Activated CD4-positive, alpha-beta T cell treated with anti-CD3 and anti-CD28 coated beads for 36 hours (primary cell): ENCODE measurements at regions of chr11 and their contacts with region 1.

Region 1: GRCh38 chr11:798093-798713 is at the start of gene SLC25A22:
- DNase-seq: peak; percentile 92
- ATAC-seq: peak; percentile 63
- H3K4me3 Mint-ChIP-seq: peak within 1 kb of the TSS; percentile 79
- H3K27ac Mint-ChIP-seq: peak within 1 kb of the TSS; percentile 67
- H3K4me1 Mint-ChIP-seq: peaks cover 13% of the 10 kb centered on the region
- H3K27me3 Mint-ChIP-seq: no peaks in the 10 kb centered on the region
- total RNA-seq, gene SLC25A22: 33.9 to 36.6 TPM

Region 2: DNA sequence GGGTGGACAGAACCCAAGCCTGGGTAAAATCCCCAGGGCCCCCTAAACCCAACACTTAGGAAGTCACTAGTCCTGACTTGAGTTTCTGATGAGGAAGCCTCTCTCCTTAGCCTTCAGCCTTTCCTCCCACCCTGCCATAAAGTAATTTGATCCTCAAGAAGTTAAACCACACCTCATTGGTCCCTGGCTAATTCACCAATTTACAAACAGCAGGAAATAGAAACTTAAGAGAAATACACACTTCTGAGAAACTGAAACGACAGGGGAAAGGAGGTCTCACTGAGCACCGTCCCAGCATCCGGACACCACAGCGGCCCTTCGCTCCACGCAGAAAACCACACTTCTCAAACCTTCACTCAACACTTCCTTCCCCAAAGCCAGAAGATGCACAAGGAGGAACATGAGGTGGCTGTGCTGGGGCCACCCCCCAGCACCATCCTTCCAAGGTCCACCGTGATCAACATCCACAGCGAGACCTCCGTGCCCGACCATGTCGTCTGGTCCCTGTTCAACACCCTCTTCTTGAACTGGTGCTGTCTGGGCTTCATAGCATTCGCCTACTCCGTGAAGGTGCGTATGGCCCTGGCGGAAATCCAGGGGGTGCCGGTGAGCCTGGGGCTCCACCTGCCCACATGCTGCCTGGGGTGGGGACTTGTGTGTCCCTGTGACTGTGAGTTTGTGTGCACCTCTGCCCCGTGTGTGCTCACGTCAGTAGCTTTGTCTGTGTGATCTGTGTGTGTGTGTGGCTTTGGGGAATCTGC is 484.2 kb before region 1 on chr11 and contains the start of gene IFITM1:
- CTCF ChIA-PET with region 1: no interaction called
- POLR2A ChIA-PET with region 1: no interaction called
- intact Hi-C with region 1: loop called in 1 of 2 experiments (anchors 5 kb)
- DNase-seq: peak; percentile 78
- ATAC-seq: peak; percentile 40
- H3K4me3 Mint-ChIP-seq: peak within 1 kb of the TSS; percentile 95
- H3K27ac Mint-ChIP-seq: peak within 1 kb of the TSS; percentile 99
- H3K4me1 Mint-ChIP-seq: peaks cover 29% of the 10 kb centered on the region
- H3K27me3 Mint-ChIP-seq: no peaks in the 10 kb centered on the region
- total RNA-seq, gene IFITM1: 248 to 285 TPM

Region 3: GRCh38 chr11:396948-397548 is 401.2 kb before region 1 on chr11:
- CTCF ChIA-PET with region 1: no interaction called
- POLR2A ChIA-PET with region 1: no interaction called
- intact Hi-C with region 1: no loop called
- DNase-seq: peak; percentile 78
- ATAC-seq: peak; percentile 84
- H3K4me3 Mint-ChIP-seq: no peak overlapping the region
- H3K27ac Mint-ChIP-seq: no peak overlapping the region
- H3K4me1 Mint-ChIP-seq: peaks cover 4% of the 10 kb centered on the region
- H3K27me3 Mint-ChIP-seq: peaks cover 8% of the 10 kb centered on the region

Region 4: GRCh38 chr11:568306-569157 is 229.7 kb before region 1 on chr11:
- CTCF ChIA-PET with region 1: no interaction called
- POLR2A ChIA-PET with region 1: no interaction called
- intact Hi-C with region 1: loop called (anchors 1 to 10 kb)
- DNase-seq: peak; percentile 97
- ATAC-seq: peak; percentile 93
- H3K4me3 Mint-ChIP-seq: peak overlapping the region; percentile 88
- H3K27ac Mint-ChIP-seq: peak overlapping the region; percentile 72
- H3K4me1 Mint-ChIP-seq: no peaks in the 10 kb centered on the region
- H3K27me3 Mint-ChIP-seq: no peaks in the 10 kb centered on the region

Region 5: DNA sequence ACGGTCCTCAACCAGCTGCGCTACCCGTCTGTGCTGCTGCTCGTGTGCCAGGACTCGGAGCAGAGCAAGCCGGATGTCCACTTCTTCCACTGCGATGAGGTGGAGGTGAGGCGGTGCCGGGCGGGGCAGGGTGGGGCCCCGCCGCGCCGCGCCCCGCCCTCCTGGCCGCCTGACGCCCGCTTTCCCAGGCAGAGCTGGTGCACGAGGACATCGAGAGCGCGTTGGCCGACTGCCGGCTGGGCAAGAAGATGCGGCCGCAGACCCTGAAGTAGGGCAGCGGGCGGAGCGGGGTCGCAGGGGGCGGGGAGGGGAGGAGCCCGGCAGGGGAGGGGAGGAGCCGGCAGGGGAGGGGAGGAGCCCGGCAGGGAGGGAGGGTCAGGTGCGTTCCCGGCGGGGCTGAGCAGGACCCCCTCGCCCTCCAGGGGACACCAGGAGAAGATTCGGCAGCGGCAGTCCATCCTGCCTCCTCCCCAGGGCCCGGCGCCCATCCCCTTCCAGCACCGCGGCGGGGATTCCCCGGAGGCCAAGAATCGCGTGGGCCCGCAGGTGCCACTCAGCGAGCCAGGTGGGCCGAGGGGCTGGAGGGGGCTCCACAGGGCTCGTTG is 77.5 kb before region 1 on chr11:
- CTCF ChIA-PET with region 1: no interaction called
- POLR2A ChIA-PET with region 1: no interaction called
- intact Hi-C with region 1: no loop called
- DNase-seq: peak; percentile 44
- ATAC-seq: peak; percentile 41
- H3K4me3 Mint-ChIP-seq: no peak overlapping the region
- H3K27ac Mint-ChIP-seq: no peak overlapping the region
- H3K4me1 Mint-ChIP-seq: peaks cover 12% of the 10 kb centered on the region
- H3K27me3 Mint-ChIP-seq: peaks cover 25% of the 10 kb centered on the region

Region 6: DNA sequence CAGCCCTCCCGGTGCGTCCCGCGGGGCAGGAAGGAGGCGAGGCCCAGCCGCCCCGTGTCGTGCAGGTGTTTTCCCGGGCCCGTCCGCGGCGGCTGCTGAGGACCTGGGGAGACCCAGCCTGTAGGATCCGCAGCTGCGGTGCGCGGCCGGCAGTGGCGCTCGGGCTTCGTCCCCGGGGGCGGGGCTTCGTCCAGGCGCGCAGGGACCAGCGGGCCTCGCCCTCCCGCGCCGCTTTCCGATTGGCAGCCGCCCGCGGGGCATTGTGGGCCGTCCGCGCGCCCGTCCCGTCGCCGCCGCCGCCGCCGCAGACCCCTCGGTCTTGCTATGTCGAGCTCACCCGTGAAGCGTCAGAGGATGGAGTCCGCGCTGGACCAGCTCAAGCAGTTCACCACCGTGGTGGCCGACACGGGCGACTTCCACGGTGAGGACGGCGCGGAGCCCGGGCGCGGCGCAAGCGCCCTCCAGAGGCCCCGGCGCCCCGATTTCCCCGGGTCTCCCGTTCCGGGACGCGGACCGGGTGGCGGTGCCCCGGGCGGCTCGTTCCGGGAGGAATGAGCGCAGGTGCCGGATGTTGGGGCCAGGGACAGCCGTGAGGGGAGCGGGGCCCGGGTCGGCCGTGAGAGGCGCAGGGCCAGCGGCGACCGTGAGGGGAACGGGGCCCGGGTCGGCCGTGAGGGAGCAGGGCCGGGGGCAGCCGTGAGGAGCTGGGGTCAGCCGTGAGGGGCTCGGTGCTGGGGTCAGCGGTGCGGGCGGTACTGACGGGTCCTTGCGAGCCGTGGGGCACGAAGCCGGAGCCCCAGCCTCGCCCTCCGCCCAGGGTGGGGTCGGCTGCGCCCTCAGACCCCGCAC is 50.8 kb before region 1 on chr11 and contains the start of gene TALDO1:
- CTCF ChIA-PET with region 1: no interaction called
- POLR2A ChIA-PET with region 1: no interaction called
- intact Hi-C with region 1: loop called in 1 of 2 experiments (anchors 1 kb)
- DNase-seq: peak; percentile 92
- ATAC-seq: peak; percentile 91
- H3K4me3 Mint-ChIP-seq: peak within 1 kb of the TSS; percentile 82
- H3K27ac Mint-ChIP-seq: peak within 1 kb of the TSS; percentile 72
- H3K4me1 Mint-ChIP-seq: peaks cover 20% of the 10 kb centered on the region
- H3K27me3 Mint-ChIP-seq: no peaks in the 10 kb centered on the region
- total RNA-seq, gene TALDO1: 239 to 246 TPM

Region 7: GRCh38 chr11:777288-778255 is 20.6 kb before region 1 on chr11 and contains the start of gene GATD1:
- CTCF ChIA-PET with region 1: interaction called, 5 read pairs
- POLR2A ChIA-PET with region 1: interaction called, 3 read pairs
- intact Hi-C with region 1: loop called (anchors 1 to 2 kb)
- DNase-seq: peak; percentile 97
- ATAC-seq: peak; percentile 91
- H3K4me3 Mint-ChIP-seq: peak within 1 kb of the TSS; percentile 89
- H3K27ac Mint-ChIP-seq: peak within 1 kb of the TSS; percentile 82
- H3K4me1 Mint-ChIP-seq: peaks cover 20% of the 10 kb centered on the region
- H3K27me3 Mint-ChIP-seq: no peaks in the 10 kb centered on the region
- total RNA-seq, gene GATD1: 45.7 to 59.8 TPM

Region 8: GRCh38 chr11:819129-819931 is 21.1 kb after region 1 on chr11:
- CTCF ChIA-PET with region 1: no interaction called
- POLR2A ChIA-PET with region 1: interaction called, 4 read pairs
- intact Hi-C with region 1: loop called in 1 of 2 experiments (anchors 1 kb)
- DNase-seq: peak; percentile 95
- ATAC-seq: peak; percentile 82
- H3K4me3 Mint-ChIP-seq: peak overlapping the region; percentile 72
- H3K27ac Mint-ChIP-seq: no peak overlapping the region
- H3K4me1 Mint-ChIP-seq: peaks cover 11% of the 10 kb centered on the region
- H3K27me3 Mint-ChIP-seq: no peaks in the 10 kb centered on the region